Activated CD4-positive, alpha-beta T cell treated with anti-CD3 and anti-CD28 coated beads, Interleukin-2, amount 10 ng/mL, durations not matched to agents 7 days and 5 days (primary cell): ENCODE measurements at regions of chr19 and their contacts with region 1.

Region 1: DNA sequence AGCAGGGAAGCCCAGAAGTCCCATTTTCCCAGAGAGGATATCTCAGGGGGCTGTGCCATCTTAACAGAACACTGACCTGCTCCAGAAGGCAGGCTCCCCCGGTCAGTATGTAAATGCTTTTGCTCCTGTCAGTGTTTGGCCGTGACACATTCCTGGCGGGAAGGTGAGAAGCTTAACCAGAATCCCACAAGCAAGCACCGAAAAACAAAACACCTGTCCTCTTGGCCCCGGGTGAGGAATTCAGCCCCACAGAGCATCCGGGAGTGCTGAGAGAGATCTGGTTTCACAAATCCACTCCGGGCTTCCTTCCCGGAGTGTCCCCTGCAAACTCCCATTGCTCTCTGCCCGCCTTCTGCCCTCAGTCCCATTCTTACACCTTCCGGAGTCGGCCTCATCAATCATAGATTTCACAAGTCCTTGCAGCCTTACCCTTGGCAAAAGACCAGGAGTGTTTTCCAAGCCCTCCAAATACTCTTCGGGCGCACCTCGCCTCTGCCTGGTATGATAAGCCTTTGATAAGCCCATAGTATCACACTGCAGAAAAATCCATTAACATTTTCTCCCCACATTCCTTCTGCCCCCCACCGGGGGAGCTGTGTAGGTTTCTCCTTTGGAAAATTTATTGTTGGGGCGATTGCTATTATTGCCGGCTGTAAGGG is 12.2 kb downstream of the TPM4 start:
- DNase-seq: no peak
- H3K4me3 Mint-ChIP-seq: no peak overlapping the region
- H3K27ac Mint-ChIP-seq: peak overlapping the region; percentile 32
- H3K4me1 Mint-ChIP-seq: peaks cover 66% of the 10 kb centered on the region
- H3K27me3 Mint-ChIP-seq: no peaks in the 10 kb centered on the region

Region 2: DNA sequence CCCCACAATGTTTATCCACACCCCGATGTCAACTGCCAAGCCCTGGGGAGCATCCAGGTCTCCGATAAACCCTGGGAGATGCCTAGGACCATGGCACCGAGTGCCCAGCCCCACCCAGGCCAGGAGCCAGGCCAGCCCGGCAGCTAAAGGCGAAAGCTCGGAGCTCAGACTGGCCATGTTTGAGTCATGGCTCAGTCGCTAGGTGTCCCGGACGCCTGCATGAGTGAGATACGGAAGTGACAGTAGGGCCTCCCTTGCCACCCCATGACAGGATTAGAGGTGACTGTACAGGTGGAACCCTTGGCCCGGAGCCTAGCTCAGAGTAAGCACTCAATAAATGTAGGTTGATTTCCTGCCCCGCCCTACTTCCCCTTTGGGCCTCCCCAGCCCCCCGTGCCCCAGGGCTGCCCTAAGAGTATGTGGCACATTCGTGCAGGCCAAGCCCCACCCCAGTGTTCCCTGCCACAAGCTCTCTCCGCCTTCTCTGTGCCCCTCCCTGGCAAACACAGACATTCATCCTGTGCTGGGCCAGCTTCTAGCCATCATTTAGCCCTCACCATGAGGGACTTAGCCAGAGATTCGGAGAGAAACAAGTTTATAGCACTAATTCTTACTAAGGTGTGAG is 18.0 kb before region 1 on chr19:
- CTCF ChIA-PET with region 1: interaction called, 10 read pairs
- POLR2A ChIA-PET with region 1: interaction called, 12 read pairs
- DNase-seq: peak; percentile 89
- H3K4me3 Mint-ChIP-seq: no peak overlapping the region
- H3K27ac Mint-ChIP-seq: no peak overlapping the region
- H3K4me1 Mint-ChIP-seq: peaks cover 53% of the 10 kb centered on the region
- H3K27me3 Mint-ChIP-seq: no peaks in the 10 kb centered on the region

Region 3: DNA sequence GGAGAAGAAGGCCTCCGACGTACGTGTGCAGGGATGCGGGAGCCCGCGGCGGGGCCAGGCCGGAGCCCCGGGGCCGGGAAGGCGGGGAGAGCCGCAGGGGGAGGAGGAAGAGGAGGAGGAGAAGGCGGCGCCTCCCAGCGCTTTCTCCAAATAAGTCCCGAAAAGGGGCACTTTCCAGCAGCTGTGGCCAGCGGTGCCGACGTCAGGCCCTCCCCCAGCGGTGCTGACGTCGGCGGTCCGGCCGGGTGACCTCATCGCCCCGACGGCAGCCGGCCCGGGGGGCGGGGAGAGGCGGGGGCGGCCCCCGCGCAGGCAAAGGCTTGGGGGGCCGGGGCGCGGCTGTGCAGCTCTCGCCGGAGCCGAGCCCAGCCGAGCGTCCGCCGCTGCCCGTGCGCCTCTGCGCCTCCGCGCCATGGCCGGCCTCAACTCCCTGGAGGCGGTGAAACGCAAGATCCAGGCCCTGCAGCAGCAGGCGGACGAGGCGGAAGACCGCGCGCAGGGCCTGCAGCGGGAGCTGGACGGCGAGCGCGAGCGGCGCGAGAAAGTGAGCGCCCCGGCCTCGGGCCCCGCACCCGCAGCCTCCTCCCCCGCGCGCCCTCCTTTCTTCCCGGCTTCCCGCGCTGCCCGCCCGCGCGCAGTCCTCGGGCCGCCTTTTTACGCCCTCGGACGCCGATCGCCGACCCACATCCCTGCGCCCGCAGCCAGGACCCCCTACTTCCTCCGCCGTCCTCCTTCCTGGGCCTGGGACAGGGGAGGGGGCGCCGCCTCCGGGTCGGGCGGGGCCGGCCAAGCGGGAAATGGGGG is 12.1 kb before region 1 on chr19 and contains the start of gene TPM4:
- CTCF ChIA-PET with region 1: interaction called, 10 read pairs
- POLR2A ChIA-PET with region 1: interaction called, 12 read pairs
- DNase-seq: peak; percentile 90
- H3K4me3 Mint-ChIP-seq: peak within 1 kb of the TSS; percentile 83
- H3K27ac Mint-ChIP-seq: peak within 1 kb of the TSS; percentile 95
- H3K4me1 Mint-ChIP-seq: peaks cover 71% of the 10 kb centered on the region
- H3K27me3 Mint-ChIP-seq: no peaks in the 10 kb centered on the region
- total RNA-seq, gene TPM4: 422 to 485 TPM